ENCODE measurements at regions of chr11 and their contacts with region 1.

Region 1: GRCh38 chr11:117843666-117844484 is 19.3 kb upstream of the FXYD2 start:
- DNase-seq: peak; percentile 18 to 64
- ATAC-seq: peak; percentile 75 to 85; a peak in 5 of 6 replicates
- H3K4me3 ChIP-seq: no peak overlapping the region
- H3K27ac ChIP-seq: no peak overlapping the region
- H3K4me1 ChIP-seq: no peaks in the 10 kb centered on the region
- CTCF ChIP-seq: peak; percentile 71
- EP300 ChIP-seq: no peak
- POLR2A ChIP-seq: no peak
- RAD21 ChIP-seq: peak; percentile 70 to 78

Region 2: GRCh38 chr11:117807482-117808327 is 36.2 kb before region 1 on chr11:
- CTCF ChIA-PET with region 1: interaction called, 11 read pairs
- POLR2A ChIA-PET with region 1: no interaction called
- DNase-seq: peak; percentile 48 to 54
- ATAC-seq: peak in 1 of 2 experiments; percentile 57; a peak in 3 of 6 replicates
- H3K4me3 ChIP-seq: no peak overlapping the region
- H3K27ac ChIP-seq: no peak overlapping the region; a peak in 1 of 6 replicates
- H3K4me1 ChIP-seq: peaks cover 13% of the 10 kb centered on the region; the same call in 2 of the 3 replicates
- CTCF ChIP-seq: peak; percentile 71
- EP300 ChIP-seq: no peak
- POLR2A ChIP-seq: no peak
- RAD21 ChIP-seq: peak; percentile 71 to 76

Region 3: GRCh38 chr11:117817368-117818040 is 26.4 kb before region 1 on chr11:
- CTCF ChIA-PET with region 1: interaction called, 20 read pairs
- POLR2A ChIA-PET with region 1: no interaction called
- DNase-seq: peak; percentile 58 to 70
- ATAC-seq: peak; percentile 48 to 81; a peak in 4 of 6 replicates
- H3K4me3 ChIP-seq: no peak overlapping the region
- H3K27ac ChIP-seq: peak overlapping the region; percentile 73 to 75; a peak in 5 of 6 replicates
- H3K4me1 ChIP-seq: peaks cover 41% of the 10 kb centered on the region
- CTCF ChIP-seq: peak; percentile 85
- EP300 ChIP-seq: no peak
- POLR2A ChIP-seq: no peak
- RAD21 ChIP-seq: peak; percentile 73 to 82

Region 4: DNA sequence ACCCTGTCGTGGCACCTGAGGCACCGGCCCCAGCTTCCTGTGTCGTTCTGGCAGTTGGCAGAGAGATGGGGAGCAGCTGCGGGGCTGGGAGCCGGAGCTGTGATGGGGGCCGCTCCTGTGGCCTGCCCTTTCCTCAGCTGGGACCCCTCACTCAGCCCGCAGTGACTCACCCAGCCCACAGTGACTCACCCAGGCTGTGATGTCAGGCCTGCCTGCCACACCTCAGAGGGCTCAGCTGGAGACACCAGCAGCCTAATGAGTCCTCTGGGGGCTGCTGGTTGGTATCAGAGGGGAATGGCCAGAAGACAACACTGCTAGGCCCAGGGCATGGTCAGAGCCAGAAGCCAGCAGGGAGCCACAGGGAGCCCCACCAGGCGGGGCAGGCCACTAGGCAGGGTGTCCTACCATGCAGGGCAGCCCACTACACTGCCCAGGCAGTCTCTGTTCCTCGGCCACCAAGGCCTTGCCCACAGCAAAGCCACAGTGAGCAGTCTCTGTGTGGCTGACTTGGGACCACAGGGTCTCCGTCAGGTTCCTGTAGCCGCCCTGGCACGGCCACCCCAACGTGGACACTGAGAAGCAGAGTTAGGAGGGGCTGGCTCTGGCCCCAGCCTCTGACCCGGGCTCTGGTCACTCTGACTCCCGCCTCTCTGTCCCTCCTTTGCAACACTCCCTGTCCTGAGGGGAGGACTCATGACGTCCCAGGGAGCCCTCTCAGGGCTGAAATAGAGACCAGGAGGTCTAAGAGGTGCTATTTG is 15.1 kb before region 1 on chr11:
- CTCF ChIA-PET with region 1: interaction called, 31 read pairs
- POLR2A ChIA-PET with region 1: no interaction called
- DNase-seq: peak; percentile 29 to 30
- ATAC-seq: peak; percentile 69 to 71
- H3K4me3 ChIP-seq: no peak overlapping the region
- H3K27ac ChIP-seq: peak overlapping the region; percentile 62 to 80; a peak in 5 of 6 replicates
- H3K4me1 ChIP-seq: peaks cover 60% of the 10 kb centered on the region
- CTCF ChIP-seq: no peak
- EP300 ChIP-seq: no peak
- POLR2A ChIP-seq: no peak
- RAD21 ChIP-seq: no peak

Region 5: GRCh38 chr11:118051611-118052461 is 208.0 kb after region 1 on chr11:
- CTCF ChIA-PET with region 1: interaction called, 38 read pairs
- POLR2A ChIA-PET with region 1: no interaction called
- DNase-seq: no peak
- ATAC-seq: no peak
- H3K4me3 ChIP-seq: no peak overlapping the region
- H3K27ac ChIP-seq: no peak overlapping the region
- H3K4me1 ChIP-seq: no peaks in the 10 kb centered on the region
- CTCF ChIP-seq: no peak
- EP300 ChIP-seq: no peak
- POLR2A ChIP-seq: no peak
- RAD21 ChIP-seq: no peak